ENCODE measurements at regions of chr15 and their contacts with region 1.

Region 1: DNA sequence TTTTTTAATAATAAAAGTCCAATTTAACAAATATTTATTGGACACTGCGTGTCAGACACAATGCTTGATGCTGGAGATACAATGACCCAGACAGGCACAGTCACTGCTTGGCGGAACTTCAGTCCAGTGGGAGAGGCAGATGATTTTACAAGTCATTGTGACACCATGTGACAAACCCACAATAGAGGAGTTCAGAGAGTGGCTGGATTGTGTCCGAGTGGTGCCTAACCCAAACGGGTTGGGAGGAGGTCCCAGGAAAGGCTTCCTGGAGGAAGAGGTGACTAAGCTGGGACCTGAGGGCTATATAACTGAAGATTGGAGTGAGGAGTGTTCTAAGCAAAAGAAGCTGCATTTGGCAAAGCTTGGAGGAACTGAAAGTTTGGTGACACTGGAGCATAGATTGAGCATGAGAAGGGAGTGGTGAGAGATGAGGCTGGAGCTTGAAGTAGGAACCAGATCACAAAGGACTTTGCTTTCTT is 41.4 kb downstream of the CRTC3 start:
- DNase-seq: no peak
- H3K4me3 Mint-ChIP-seq: peak overlapping the region; percentile 67
- H3K27ac Mint-ChIP-seq: peak overlapping the region; percentile 73
- H3K4me1 Mint-ChIP-seq: peaks cover 67% of the 10 kb centered on the region
- H3K27me3 Mint-ChIP-seq: no peaks in the 10 kb centered on the region

Region 2: DNA sequence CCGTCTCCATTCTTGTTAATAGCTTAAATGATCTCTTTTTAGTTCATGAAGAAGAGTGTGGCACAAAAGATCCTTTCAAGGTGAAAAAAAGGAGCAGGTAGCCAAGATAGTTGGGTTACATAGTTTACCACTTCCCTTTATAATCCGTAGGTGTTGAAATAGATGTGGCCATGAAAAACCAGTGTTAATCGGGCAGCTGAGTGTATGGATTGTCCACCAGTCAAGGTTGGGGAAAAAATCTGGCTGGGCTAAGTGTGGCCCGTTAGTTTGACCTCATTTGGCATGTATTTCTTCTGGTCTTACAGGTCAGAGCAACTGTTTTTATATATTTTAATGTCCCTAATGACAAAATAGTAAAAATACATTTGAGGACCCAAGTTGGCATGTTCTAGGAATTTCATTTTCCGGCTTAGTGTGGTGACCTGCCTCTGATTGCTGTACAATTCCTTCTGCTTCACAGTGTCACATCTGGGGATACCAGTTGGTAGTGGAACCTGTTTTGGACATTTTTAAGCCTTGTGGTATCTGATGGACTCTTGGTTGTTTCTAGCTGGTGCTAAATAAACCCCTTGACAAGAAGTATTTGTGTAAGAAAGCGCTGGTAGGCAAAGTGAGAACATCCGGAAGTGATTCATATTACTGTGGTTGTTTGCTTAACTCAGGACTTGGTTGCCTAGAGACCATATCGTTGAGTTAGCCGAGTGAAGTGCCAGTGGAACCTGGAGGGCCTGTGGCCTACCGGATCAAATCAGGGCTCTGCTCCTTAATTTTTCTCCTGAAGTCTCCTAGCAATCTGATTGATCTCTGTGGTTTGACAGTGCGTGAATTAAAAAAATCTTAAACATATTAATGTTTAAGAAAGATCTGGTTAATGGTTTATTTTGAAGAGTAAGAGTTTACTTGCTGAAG is 170.4 kb before region 1 on chr15:
- intact Hi-C with region 1: loop called (anchors 5 kb)
- DNase-seq: peak; percentile 70
- H3K4me3 Mint-ChIP-seq: peak overlapping the region; percentile 68
- H3K27ac Mint-ChIP-seq: peak overlapping the region; percentile 93
- H3K4me1 Mint-ChIP-seq: peaks cover 54% of the 10 kb centered on the region
- H3K27me3 Mint-ChIP-seq: no peaks in the 10 kb centered on the region

Region 3: GRCh38 chr15:90539789-90540188 is 31.3 kb before region 1 on chr15:
- intact Hi-C with region 1: loop called (anchors 5 kb)
- DNase-seq: no peak
- H3K4me3 Mint-ChIP-seq: peak overlapping the region; percentile 73
- H3K27ac Mint-ChIP-seq: peak overlapping the region; percentile 89
- H3K4me1 Mint-ChIP-seq: peaks cover 63% of the 10 kb centered on the region
- H3K27me3 Mint-ChIP-seq: no peaks in the 10 kb centered on the region

Region 4: GRCh38 chr15:90560229-90560776 is 10.8 kb before region 1 on chr15:
- intact Hi-C with region 1: loop called (anchors 1 kb)
- DNase-seq: no peak
- H3K4me3 Mint-ChIP-seq: no peak overlapping the region
- H3K27ac Mint-ChIP-seq: no peak overlapping the region
- H3K4me1 Mint-ChIP-seq: peaks cover 79% of the 10 kb centered on the region
- H3K27me3 Mint-ChIP-seq: no peaks in the 10 kb centered on the region

Region 5: DNA sequence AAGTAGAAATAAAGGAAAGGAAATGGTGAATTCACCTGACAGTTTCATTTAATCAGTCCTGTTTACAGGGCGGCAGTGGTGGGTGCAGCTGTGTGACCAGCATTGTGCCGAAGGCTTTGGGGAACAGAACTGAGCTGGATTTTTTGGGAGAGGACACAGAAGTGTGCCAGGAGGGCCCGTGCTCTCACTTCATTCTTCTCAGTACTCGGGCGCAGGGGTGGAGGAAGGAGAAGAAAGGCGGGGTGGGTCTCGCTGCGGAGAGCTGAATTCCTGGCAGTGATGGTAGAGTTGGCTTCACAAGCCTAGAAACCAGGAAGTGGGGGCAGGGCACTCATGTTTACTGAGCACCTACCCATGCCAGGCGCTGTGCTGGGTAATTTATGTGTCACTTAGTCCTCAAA is 23.2 kb after region 1 on chr15:
- intact Hi-C with region 1: loop called (anchors 2 kb)
- DNase-seq: peak; percentile 74
- H3K4me3 Mint-ChIP-seq: peak overlapping the region; percentile 78
- H3K27ac Mint-ChIP-seq: peak overlapping the region; percentile 99
- H3K4me1 Mint-ChIP-seq: peaks cover 72% of the 10 kb centered on the region
- H3K27me3 Mint-ChIP-seq: no peaks in the 10 kb centered on the region

Region 6: GRCh38 chr15:90618330-90619125 is 47.4 kb after region 1 on chr15:
- intact Hi-C with region 1: loop called (anchors 5 kb)
- DNase-seq: no peak
- H3K4me3 Mint-ChIP-seq: no peak overlapping the region
- H3K27ac Mint-ChIP-seq: peak overlapping the region; percentile 60
- H3K4me1 Mint-ChIP-seq: peaks cover 50% of the 10 kb centered on the region
- H3K27me3 Mint-ChIP-seq: no peaks in the 10 kb centered on the region

Region 7: GRCh38 chr15:90660195-90660998 is 89.3 kb after region 1 on chr15:
- intact Hi-C with region 1: loop called (anchors 2 kb)
- DNase-seq: peak; percentile 73
- H3K4me3 Mint-ChIP-seq: peak overlapping the region; percentile 74
- H3K27ac Mint-ChIP-seq: peak overlapping the region; percentile 82
- H3K4me1 Mint-ChIP-seq: peaks cover 72% of the 10 kb centered on the region
- H3K27me3 Mint-ChIP-seq: no peaks in the 10 kb centered on the region

Measured in activated T-helper 2 cell treated with anti-CD3 and anti-CD28 coated beads, Interferon-gamma antibody, Interleukin-2, Interleukin-4, amounts not matched to agents 10 μg/mL and 5 μg/mL and 100 μg/mL, durations not matched to agents 14 hours and 24 hours and 36 hours (primary cell).